Dorsolateral prefrontal cortex (tissue), 120 donors: ENCODE measurements at regions of chr12 and their contacts with region 1.

Region 1: GRCh38 chr12:15532364-15532977 is 210.2 kb downstream of the PTPRO start:
- DNase-seq: no peak
- H3K4me3 ChIP-seq: no peak overlapping the region
- H3K27ac ChIP-seq: no peak overlapping the region
- H3K27me3 ChIP-seq: no peaks in the 10 kb centered on the region
- CTCF ChIP-seq: peak in 54 of 56 donors; percentile 23 to 75 (median 52)

Region 2: GRCh38 chr12:15574353-15574752 is 41.9 kb after region 1 on chr12:
- intact Hi-C with region 1: loop called in 1 of 2 experiments (anchors 5 kb)
- DNase-seq: no peak
- H3K4me3 ChIP-seq: no peak overlapping the region
- H3K27ac ChIP-seq: peak overlapping the region in 2 of 59 donors; percentile 25 to 89
- H3K27me3 ChIP-seq: no peaks in the 10 kb centered on the region
- CTCF ChIP-seq: no peak

Region 3: DNA sequence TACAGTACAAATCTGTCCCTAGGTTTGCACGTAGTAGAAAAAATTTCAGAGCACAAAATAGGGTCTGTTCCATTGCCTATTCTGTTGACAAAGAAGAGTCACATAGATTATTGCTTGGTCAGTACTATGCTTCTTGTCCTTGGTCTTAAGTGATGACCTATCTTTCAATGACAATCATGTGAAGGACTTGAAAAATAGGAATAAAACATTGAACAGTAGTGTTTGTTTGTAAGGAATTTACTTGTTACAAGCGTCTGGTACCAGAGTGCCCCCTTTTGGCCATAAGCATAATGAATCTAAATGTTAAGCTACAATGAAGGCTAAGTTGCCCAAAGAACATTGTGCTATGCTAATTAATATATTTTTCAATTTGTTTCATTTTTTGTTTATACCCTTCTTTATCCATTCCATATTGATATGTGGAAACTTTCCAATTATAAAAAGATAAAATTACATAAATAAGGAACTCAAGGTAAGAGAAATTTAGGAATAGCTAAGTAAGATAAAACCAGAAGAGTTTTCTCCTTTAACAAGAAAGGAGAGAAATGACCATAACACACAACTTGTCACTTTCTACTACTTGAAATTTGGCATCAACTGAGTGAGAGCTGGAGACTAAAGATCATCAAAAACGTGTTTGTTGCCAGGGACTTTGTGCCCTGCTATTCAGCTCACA is 52.0 kb after region 1 on chr12:
- intact Hi-C with region 1: loop called in 1 of 2 experiments (anchors 1 kb)
- DNase-seq: peak in 1 of 10 donors; percentile 40
- H3K4me3 ChIP-seq: peak overlapping the region in 2 of 59 donors; percentile 22 to 30
- H3K27ac ChIP-seq: peak overlapping the region in 2 of 59 donors; percentile 2 to 16
- H3K27me3 ChIP-seq: no peaks in the 10 kb centered on the region
- CTCF ChIP-seq: peak; percentile 55 to 94 (median 77)